ENCODE measurements at regions of chr14 and their contacts with region 1.

Region 1: DNA sequence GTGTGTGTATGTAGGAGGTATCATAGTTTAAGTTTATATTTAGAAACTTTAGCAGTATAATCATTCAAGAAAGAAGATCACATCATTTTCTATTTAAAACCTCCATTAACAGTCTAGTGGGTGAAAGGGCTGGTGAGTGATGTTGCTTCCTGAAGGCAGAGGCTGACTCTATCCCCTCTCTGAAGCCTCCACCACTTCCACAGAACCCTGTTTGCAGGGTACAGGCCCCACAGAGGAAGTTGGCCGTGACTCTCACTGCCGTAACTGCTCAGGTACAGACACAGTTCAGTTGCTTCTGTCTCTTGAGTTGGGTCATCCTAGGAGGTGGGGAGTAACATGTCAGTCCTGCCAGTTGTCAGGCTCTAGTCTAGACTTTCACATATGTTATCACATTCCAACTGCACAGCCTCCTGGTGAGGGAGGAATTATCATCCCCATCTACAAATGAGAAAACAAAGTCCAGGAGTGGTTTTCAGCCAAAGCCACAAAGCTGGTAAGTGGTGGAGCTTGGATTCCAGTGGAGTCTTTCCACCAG is 31.5 kb downstream of the CFL2 start:
- DNase-seq: no peak
- H3K4me3 ChIP-seq: no peak overlapping the region
- H3K27ac ChIP-seq: no peak overlapping the region
- H3K4me1 ChIP-seq: peaks cover 6% of the 10 kb centered on the region
- H3K27me3 ChIP-seq: no peaks in the 10 kb centered on the region
- CTCF ChIP-seq: no peak

Region 2: GRCh38 chr14:34982417-34983147 is 299.7 kb after region 1 on chr14 and contains the start of gene SRP54:
- CTCF ChIA-PET with region 1: no interaction called
- POLR2A ChIA-PET with region 1: no interaction called
- intact Hi-C with region 1: loop called (anchors 10 kb)
- DNase-seq: peak; percentile 99
- H3K4me3 ChIP-seq: peak within 1 kb of the TSS; percentile 77
- H3K27ac ChIP-seq: peak within 1 kb of the TSS; percentile 99
- H3K4me1 ChIP-seq: peaks cover 24% of the 10 kb centered on the region
- H3K27me3 ChIP-seq: no peaks in the 10 kb centered on the region
- CTCF ChIP-seq: no peak
- total RNA-seq, gene SRP54: 60.2 and 60.3 TPM in 2 replicates